ENCODE measurements at regions of chr3 and their contacts with region 1.

Region 1: GRCh38 chr3:128560766-128561165 is 67.8 kb upstream of the GATA2 start:
- DNase-seq: no peak
- H3K4me3 ChIP-seq: no peak overlapping the region
- H3K27ac ChIP-seq: no peak overlapping the region
- H3K4me1 ChIP-seq: peaks cover 22% of the 10 kb centered on the region
- H3K27me3 ChIP-seq: peaks cover 21 to 24% of the 10 kb centered on the region in 2 experiments
- CTCF ChIP-seq: no peak
- POLR2A ChIP-seq: no peak

Region 2: DNA sequence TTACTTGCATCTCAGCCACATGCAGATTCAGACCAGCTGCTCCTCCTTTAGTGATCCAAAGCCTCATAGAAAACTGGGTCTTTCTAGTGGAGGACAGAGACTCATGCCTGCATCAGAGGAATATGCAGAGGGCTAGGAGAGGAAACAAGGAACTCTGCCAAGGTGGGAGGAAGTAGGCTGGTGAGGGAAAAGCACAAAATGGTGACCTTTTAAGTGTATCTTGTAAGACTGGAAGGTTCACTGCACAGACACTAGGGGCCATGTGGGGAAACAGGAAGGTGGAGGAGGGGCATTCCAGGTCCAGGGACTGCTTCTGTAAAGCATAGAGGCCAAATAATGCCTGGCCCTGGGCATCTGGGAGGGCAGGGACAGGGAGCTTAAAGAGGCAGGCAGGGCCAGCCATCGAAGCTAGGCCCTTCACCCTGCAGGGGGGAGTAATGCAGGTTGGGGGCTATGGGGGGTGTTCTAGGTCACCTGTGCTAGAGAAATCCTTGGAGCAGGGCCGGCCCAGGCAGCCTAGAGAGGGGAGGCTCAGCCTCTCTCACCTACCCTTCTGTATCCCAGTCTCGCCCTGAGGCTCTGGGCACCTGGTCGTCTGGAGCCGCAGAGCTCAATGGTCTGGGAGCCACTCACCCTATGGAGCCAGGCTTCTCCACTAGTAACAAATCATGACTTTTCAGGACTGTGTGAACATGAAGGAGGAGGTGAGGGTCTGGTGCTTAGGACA is 211.8 kb before region 1 on chr3:
- CTCF ChIA-PET with region 1: no interaction called
- POLR2A ChIA-PET with region 1: no interaction called
- dilution Hi-C with region 1: no loop called
- intact Hi-C with region 1: no loop called
- DNase-seq: peak; percentile 29
- H3K4me3 ChIP-seq: no peak overlapping the region
- H3K27ac ChIP-seq: no peak overlapping the region
- H3K4me1 ChIP-seq: peaks cover 15% of the 10 kb centered on the region
- H3K27me3 ChIP-seq: no peaks in the 10 kb centered on the region
- CTCF ChIP-seq: no peak
- POLR2A ChIP-seq: no peak

Region 3: DNA sequence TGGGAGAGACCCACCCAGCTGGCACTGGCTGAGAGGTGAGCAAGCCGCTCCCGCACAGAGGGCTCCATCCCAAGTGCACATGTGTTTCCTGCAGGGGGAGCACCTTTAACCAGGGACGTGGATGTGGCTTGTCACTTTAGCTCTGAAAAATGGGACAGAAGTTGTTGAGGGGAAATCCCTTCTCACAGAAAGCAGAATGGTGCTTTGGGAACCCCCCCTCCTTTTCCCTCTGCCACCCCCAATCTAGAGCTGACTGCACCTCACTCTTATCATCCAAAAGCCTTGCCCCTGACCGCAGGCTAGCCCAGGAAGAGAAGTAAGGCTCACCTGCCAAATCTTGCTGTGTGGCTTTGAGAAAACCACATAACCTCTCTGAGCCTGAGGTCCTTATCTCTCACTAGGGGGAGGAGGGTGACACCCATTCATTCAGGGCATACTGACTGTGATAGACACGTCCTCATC is 11.9 kb after region 1 on chr3:
- CTCF ChIA-PET with region 1: interaction called, 12 read pairs
- POLR2A ChIA-PET with region 1: no interaction called
- dilution Hi-C with region 1: no loop called
- intact Hi-C with region 1: loop called (anchors 1 kb)
- DNase-seq: no peak
- H3K4me3 ChIP-seq: no peak overlapping the region
- H3K27ac ChIP-seq: no peak overlapping the region
- H3K4me1 ChIP-seq: peaks cover 22% of the 10 kb centered on the region
- H3K27me3 ChIP-seq: peaks cover 16 to 50% of the 10 kb centered on the region in 2 experiments
- CTCF ChIP-seq: peak; percentile 23 to 24
- POLR2A ChIP-seq: no peak